Heart right ventricle (tissue), 16 donors: ENCODE measurements at regions of chr2 and their contacts with region 1.

Region 1: GRCh38 chr2:172806493-172806892 is 70.8 kb downstream of the RAPGEF4 start:
- DNase-seq: peak in 1 of 2 donors; percentile 25
- ATAC-seq: peak in 4 of 8 donors; percentile 41 to 66 (median 50)
- H3K4me3 ChIP-seq: no peak overlapping the region
- H3K27ac ChIP-seq: no peak overlapping the region
- H3K4me1 ChIP-seq: peaks cover 0 to 6% (median 0%) of the 10 kb centered on the region in 9 donors
- H3K27me3 ChIP-seq: peaks cover 0 to 4% (median 0%) of the 10 kb centered on the region in 7 donors
- CTCF ChIP-seq: peak; percentile 68 to 94 (median 90)

Region 2: DNA sequence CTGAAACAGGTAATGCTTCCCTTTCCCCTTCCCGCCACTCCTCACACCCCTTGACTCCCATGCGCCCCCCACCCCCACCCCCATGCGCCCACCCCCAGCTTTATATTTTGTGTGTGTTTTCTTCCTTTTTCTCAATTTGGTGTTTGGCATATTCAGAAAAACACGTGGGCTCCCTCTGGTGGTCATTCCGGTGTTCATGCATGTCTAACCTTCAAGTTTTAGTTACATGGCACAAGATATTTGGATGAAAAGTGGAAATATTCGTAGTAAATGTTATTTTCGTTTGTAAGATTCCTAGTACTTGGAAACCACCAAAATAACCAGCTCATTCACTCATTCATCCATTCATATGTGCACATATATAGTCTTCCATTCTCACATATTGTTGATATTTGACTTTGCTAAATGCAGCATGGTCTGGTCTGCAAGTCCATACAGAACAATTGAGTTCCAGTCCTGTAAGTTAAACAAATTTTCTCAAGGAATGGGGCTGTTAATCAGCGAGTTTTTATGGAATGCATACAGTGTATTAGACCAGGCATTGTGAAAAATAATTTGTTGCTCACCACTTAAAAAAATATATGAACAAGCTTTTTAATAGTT is 125.5 kb after region 1 on chr2:
- intact Hi-C with region 1: loop called in 7 of 10 experiments (anchors 1 to 5 kb)
- DNase-seq: peak; percentile 52 to 79
- ATAC-seq: peak in 7 of 8 donors; percentile 30 to 75 (median 37)
- H3K4me3 ChIP-seq: peak overlapping the region in 6 of 10 donors; percentile 3 to 33 (median 26)
- H3K27ac ChIP-seq: peak overlapping the region in 9 of 10 donors; percentile 2 to 82 (median 63)
- H3K4me1 ChIP-seq: peaks cover 3 to 49% (median 40%) of the 10 kb centered on the region in 9 donors
- H3K27me3 ChIP-seq: no peaks in the 10 kb centered on the region
- CTCF ChIP-seq: peak; percentile 65 to 82 (median 74)

Region 3: GRCh38 chr2:173021939-173022371 is 215.5 kb after region 1 on chr2:
- intact Hi-C with region 1: loop called in 4 of 10 experiments (anchors 5 to 10 kb)
- DNase-seq: peak; percentile 45 to 49
- ATAC-seq: peak; percentile 56 to 91 (median 86)
- H3K4me3 ChIP-seq: no peak overlapping the region
- H3K27ac ChIP-seq: peak overlapping the region in 7 of 10 donors; percentile 39 to 66 (median 61)
- H3K4me1 ChIP-seq: peaks cover 0 to 26% (median 6%) of the 10 kb centered on the region in 9 donors
- H3K27me3 ChIP-seq: no peaks in the 10 kb centered on the region
- CTCF ChIP-seq: peak in 8 of 9 donors; percentile 13 to 58 (median 43)

Region 4: DNA sequence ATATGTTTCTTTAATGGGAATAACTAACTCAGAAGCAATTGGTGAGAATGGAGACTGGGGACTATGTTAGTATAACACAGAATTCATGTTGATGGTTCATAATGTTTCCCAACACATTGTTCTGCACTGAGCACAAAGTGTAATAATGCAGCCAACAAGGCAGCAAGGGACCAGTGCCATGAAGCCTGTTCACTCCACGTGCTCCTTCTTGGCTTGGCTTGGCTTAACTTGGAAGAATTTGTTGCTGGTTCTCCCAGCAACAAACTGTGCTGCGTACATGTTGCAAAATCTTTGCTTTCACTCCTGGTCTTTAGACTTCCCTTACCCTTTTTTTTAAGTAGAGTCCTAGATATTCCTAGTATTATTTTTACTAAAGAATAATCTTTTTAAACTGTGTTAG is 398.9 kb after region 1 on chr2:
- intact Hi-C with region 1: loop called in 6 of 10 experiments (anchors 2 to 10 kb)
- DNase-seq: peak; percentile 46 to 84
- ATAC-seq: peak; percentile 87 to 98 (median 94)
- H3K4me3 ChIP-seq: no peak overlapping the region
- H3K27ac ChIP-seq: peak overlapping the region; percentile 45 to 83 (median 71)
- H3K4me1 ChIP-seq: peaks cover 9 to 72% (median 53%) of the 10 kb centered on the region in 9 donors
- H3K27me3 ChIP-seq: no peaks in the 10 kb centered on the region
- CTCF ChIP-seq: no peak